ENCODE measurements at regions of chr3 and their contacts with region 1.

Region 1: GRCh38 chr3:42442640-42443039 is 32.2 kb upstream of the LYZL4 start:
- DNase-seq: no peak
- H3K4me3 ChIP-seq: no peak overlapping the region
- H3K27ac ChIP-seq: no peak overlapping the region
- H3K4me1 ChIP-seq: no peaks in the 10 kb centered on the region
- H3K27me3 ChIP-seq: no peaks in the 10 kb centered on the region
- CTCF ChIP-seq: no peak
- POLR2A ChIP-seq: no peak

Region 2: DNA sequence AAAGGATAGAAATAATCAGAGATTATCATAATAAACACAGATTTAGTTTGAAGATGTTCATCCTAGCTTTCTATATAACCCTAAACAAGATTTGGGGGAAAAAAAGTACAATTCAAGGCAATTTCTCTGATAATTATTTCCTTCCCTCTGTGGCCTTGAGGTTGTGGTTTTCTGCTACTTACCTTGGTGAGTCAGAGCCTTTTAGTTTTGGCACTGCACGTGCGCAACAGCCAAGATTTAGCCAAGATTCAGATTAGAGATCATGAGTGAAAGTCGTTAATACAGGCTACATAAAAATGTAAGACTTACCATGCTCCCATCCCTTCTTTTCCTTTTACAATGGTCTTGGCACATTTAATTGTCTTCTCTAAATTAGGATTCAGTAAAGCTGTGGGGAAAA is 38.9 kb before region 1 on chr3:
- intact Hi-C with region 1: no loop called
- DNase-seq: no peak
- H3K4me3 ChIP-seq: no peak overlapping the region
- H3K27ac ChIP-seq: no peak overlapping the region
- H3K4me1 ChIP-seq: no peaks in the 10 kb centered on the region
- H3K27me3 ChIP-seq: no peaks in the 10 kb centered on the region
- CTCF ChIP-seq: no peak
- POLR2A ChIP-seq: no peak

Region 3: GRCh38 chr3:42539869-42540714 is 97.5 kb after region 1 on chr3:
- intact Hi-C with region 1: loop called (anchors 2 kb)
- DNase-seq: peak; percentile 54 to 84
- H3K4me3 ChIP-seq: no peak overlapping the region
- H3K27ac ChIP-seq: peak overlapping the region in 1 of 2 donors; percentile 19
- H3K4me1 ChIP-seq: peaks cover 0 to 4% of the 10 kb centered on the region in 2 donors
- H3K27me3 ChIP-seq: no peaks in the 10 kb centered on the region
- CTCF ChIP-seq: peak; percentile 56 to 82 (median 82)
- POLR2A ChIP-seq: no peak

Measured in breast epithelium (tissue), 4 donors.